H1 (cell line): ENCODE measurements at regions of chr16 and their contacts with region 1.

Region 1: DNA sequence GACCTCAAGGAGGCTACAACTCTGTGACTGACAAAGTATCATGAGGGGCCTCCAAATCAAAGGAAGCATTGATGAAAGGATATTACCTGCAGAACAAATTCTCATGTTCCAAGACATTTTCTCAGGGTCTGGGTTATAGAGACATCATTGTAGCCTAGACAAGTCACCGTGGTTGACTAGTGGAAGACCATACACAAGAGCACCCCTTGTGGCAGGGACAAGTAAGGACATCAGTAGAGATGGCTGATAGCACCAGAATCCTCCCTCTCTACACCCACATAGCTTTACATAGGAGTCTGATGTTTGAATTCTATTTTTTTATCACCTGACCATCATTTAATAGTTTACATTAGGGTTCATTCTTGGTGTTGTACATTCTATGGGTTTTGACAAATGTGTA is 32.5 kb upstream of the CDH8 start:
- DNase-seq: no peak
- H3K4me3 ChIP-seq: no peak overlapping the region
- H3K27ac ChIP-seq: no peak overlapping the region
- H3K4me1 ChIP-seq: peaks cover 0 to 5% (median 0%) of the 10 kb centered on the region in 4 experiments; a peak in 3 of 7 replicates
- H3K27me3 ChIP-seq: no peaks in the 10 kb centered on the region
- CTCF ChIP-seq: peak; percentile 25 to 78 (median 50)
- EP300 ChIP-seq: no peak
- POLR2A ChIP-seq: no peak
- RAD21 ChIP-seq: peak; percentile 32 to 55; a peak in 3 of 4 replicates

Region 2: GRCh38 chr16:62051942-62052341 is 16.8 kb before region 1 on chr16:
- CTCF ChIA-PET with region 1: interaction called, 12 read pairs
- POLR2A ChIA-PET with region 1: no interaction called
- DNase-seq: no peak
- H3K4me3 ChIP-seq: no peak overlapping the region
- H3K27ac ChIP-seq: no peak overlapping the region
- H3K4me1 ChIP-seq: peaks cover 0 to 15% (median 5%) of the 10 kb centered on the region in 4 experiments; a peak in 4 of 7 replicates
- H3K27me3 ChIP-seq: no peaks in the 10 kb centered on the region
- CTCF ChIP-seq: no peak
- EP300 ChIP-seq: no peak
- POLR2A ChIP-seq: no peak
- RAD21 ChIP-seq: no peak

Region 3: GRCh38 chr16:62213763-62214162 is 145.0 kb after region 1 on chr16:
- CTCF ChIA-PET with region 1: no interaction called
- POLR2A ChIA-PET with region 1: no interaction called
- DNase-seq: peak; percentile 29 to 60
- H3K4me3 ChIP-seq: no peak overlapping the region
- H3K27ac ChIP-seq: no peak overlapping the region
- H3K4me1 ChIP-seq: no peaks in the 10 kb centered on the region
- H3K27me3 ChIP-seq: no peaks in the 10 kb centered on the region
- CTCF ChIP-seq: peak; percentile 98 to 99 (median 99)
- EP300 ChIP-seq: no peak
- POLR2A ChIP-seq: no peak
- RAD21 ChIP-seq: peak; percentile 64 to 74